Lower leg skin (tissue), 4 donors: ENCODE measurements at regions of chr20 and their contacts with region 1.

Region 1: DNA sequence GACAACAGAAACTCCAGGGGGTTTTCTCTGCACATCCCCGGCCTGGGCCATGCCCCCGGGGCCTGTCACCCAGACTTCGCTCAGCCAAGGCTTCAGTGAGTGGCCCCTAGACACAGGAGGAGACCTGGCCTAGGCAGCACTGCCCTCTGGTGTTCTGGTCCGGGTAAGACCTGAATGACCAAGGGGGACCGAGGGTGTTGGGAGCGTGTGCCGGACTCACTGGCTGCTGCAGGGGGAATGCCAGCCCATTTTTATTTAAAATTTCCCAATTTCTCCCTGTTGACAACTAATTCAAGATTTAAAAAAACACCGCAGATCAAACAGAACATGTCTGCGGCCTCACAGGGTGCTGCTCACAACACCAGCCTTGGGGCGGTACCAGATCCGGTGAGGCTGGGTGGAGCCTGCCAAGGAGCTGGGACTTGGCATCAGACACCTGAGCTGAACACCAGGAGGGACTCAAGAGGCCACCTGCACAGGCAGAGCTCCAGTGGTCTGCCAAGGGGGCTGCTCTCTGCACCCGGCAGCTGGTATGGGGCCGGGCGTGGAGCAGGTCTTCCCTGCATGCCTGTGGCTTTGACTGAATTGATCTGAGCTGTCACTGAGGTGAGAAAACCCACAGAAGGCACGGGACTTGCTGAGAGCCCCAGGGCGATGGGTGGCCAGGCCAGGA is 47.8 kb downstream of the DSTN start:
- DNase-seq: peak in 1 of 2 donors; percentile 89
- H3K4me3 ChIP-seq: no peak overlapping the region
- CTCF ChIP-seq: peak in 1 of 3 donors; percentile 66
- POLR2A ChIP-seq: no peak

Region 2: DNA sequence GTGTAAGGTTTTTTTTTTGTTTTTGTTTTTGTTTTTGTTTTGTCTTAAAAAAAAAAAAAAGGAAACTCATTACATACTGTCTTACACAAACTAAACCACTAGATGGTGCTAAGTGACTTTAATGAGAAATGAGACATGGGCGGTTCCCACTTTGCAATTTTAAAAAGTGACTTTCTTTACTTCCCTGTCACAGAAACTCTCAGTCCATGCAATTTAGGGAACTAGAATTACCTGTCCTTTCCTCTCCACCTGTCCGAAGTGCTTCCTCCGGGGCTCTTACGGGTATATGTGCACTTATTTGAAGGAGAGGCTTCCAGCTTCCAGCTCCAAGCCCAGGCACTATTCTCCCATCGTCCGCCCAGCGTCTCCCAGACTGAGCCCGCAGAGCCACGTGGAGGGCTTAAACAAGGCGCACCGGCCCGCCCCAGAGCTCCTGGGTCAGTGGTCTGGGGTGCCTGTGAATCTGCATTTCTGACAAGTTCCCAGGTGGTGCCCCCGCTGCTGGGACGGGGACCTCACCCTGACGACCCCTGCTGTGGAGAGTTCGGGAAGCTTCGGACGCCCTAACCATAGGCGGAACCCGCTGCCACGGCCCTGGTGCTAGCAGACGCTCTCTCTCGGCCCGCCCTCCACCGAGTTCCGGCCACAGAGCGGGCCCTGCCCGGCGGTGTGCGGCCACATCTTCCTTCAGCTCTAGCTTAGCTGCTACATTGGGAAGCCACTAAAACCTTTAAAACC is 112.6 kb before region 1 on chr20:
- intact Hi-C with region 1: loop called (anchors 5 kb)
- DNase-seq: peak; percentile 30 to 91
- H3K4me3 ChIP-seq: no peak overlapping the region
- CTCF ChIP-seq: no peak
- POLR2A ChIP-seq: no peak

Region 3: GRCh38 chr20:17536944-17537444 is 80.7 kb before region 1 on chr20:
- intact Hi-C with region 1: loop called (anchors 5 kb)
- DNase-seq: peak; percentile 66 to 88
- H3K4me3 ChIP-seq: no peak overlapping the region
- CTCF ChIP-seq: peak in 1 of 3 donors; percentile 96
- POLR2A ChIP-seq: no peak

Region 4: GRCh38 chr20:17604852-17605660 is 12.6 kb before region 1 on chr20:
- intact Hi-C with region 1: no loop called
- DNase-seq: no peak
- H3K4me3 ChIP-seq: no peak overlapping the region
- CTCF ChIP-seq: no peak
- POLR2A ChIP-seq: no peak